ENCODE measurements at regions of chr18 and their contacts with region 1.

Region 1: GRCh38 chr18:34514238-34514637 is 195.9 kb upstream of the DTNA start:
- DNase-seq: peak; percentile 82
- H3K4me3 ChIP-seq: no peak overlapping the region
- H3K27ac ChIP-seq: no peak overlapping the region
- H3K4me1 ChIP-seq: no peaks in the 10 kb centered on the region
- H3K27me3 ChIP-seq: no peaks in the 10 kb centered on the region
- CTCF ChIP-seq: no peak

Region 2: GRCh38 chr18:34444622-34445021 is 69.6 kb before region 1 on chr18:
- CTCF ChIA-PET with region 1: no interaction called
- dilution Hi-C with region 1: loop called (anchors 5 kb)
- in situ Hi-C with region 1: no loop called
- intact Hi-C with region 1: no loop called
- DNase-seq: no peak
- H3K4me3 ChIP-seq: no peak overlapping the region
- H3K27ac ChIP-seq: no peak overlapping the region
- H3K4me1 ChIP-seq: no peaks in the 10 kb centered on the region
- H3K27me3 ChIP-seq: no peaks in the 10 kb centered on the region
- CTCF ChIP-seq: no peak

Region 3: DNA sequence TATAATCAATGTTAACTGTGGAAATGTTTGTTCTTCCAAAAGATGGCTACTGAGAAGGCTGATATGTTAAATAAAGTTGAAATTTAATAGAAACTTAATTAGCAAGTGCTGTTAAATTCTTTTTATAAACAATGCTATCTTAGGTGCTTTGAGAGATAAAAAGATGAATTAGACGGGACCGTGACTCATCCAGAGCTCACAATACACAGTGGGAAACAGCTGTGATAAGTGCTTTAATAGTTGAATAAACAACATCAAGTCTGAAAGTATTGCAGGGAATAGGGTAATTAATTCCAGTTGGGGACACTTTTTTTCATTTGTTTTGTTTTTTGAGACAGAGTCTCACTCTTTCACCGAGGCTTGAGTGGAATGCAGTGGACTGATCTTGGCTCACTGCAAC is 110.3 kb after region 1 on chr18:
- CTCF ChIA-PET with region 1: no interaction called
- dilution Hi-C with region 1: no loop called
- in situ Hi-C with region 1: no loop called
- intact Hi-C with region 1: no loop called
- DNase-seq: no peak
- H3K4me3 ChIP-seq: no peak overlapping the region
- H3K27ac ChIP-seq: no peak overlapping the region
- H3K4me1 ChIP-seq: no peaks in the 10 kb centered on the region
- H3K27me3 ChIP-seq: no peaks in the 10 kb centered on the region
- CTCF ChIP-seq: no peak